ENCODE measurements at regions of chr1 and their contacts with region 1.

Region 1: DNA sequence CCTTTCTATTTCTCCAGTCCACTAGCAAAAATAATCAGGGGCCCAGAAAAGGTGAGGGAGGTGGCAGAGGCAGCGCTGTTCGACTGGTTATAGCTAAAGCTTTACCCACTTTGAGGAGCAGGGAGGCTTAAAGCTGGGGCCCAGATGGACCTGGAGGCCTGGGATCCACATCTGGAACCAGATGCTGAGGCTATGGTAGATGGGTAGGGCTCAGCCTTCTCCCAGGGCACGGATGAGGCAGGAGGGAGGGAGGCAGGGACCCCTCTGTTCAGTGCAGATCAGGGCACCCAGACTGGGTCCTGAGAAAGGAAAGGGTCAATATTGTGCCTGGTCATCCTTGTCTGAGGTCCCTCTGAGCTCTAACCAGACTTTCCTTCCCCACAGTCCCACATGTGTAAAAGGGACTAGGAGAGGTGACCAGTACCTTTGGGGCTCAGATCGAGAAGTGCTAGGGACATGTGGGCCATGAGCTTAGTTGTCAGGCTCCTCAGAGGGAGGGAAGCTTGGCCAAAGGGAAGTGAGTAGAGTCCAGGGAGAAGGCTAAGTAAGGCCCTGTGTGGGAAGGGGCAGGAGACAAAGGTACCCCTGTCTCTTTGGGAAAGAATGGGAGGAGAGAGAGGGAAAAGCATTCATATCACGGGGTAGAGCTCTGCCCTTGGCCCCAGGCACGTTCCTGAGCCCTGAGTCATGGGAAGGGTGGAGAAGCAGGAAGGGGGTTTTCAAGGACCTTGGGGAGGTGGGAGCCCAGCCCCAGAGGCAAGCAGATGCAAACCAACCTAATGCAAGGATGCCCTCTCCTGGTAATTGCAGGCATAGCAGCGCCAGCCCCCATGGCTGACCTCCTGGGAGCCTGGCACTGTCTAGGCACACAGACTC is 15.4 kb downstream of the LMNA start:
- DNase-seq: peak; percentile 77
- CTCF ChIP-seq: peak; percentile 96

Region 2: GRCh38 chr1:155424091-155424490 is 705.9 kb before region 1 on chr1:
- CTCF ChIA-PET with region 1: no interaction called
- POLR2A ChIA-PET with region 1: no interaction called
- DNase-seq: no peak
- CTCF ChIP-seq: no peak

Region 3: DNA sequence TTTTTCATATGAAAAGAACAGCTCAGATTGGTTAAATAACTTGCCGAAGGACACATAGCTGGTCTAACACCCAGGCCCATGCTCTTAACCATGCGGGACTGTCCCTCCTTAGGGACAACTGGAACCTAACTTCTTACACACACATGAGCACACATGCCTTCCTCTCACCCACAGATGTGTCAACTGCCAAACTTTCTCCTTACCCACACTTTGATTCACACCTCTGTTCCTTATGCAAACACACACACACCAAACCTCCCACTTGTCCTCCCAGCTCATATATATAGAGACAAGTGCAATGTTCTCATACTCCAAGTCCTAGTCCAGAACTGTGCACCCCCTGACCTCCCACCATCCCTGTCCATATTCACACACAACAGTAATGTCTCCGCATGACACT is 64.7 kb before region 1 on chr1:
- CTCF ChIA-PET with region 1: interaction called, 12 read pairs
- POLR2A ChIA-PET with region 1: no interaction called
- DNase-seq: no peak
- CTCF ChIP-seq: no peak

Region 4: DNA sequence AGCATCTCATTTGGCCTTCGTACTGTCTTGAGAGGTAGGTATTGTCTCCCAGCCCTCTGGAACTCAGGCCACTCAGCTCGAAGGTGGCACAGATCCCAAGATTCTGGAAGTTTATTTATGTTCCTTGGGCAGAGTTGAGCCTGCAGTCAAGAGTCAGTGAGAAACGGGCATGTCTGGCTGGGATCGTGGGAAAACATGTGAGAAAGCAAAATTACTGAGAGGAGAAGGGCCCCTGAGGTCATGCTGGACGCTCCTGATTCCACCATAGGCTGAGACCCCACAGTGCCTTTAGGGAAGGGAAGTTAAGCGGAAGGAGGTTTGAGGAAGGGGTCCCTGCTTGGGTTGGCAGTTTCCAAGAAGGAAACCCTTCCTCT is 10.9 kb after region 1 on chr1:
- CTCF ChIA-PET with region 1: interaction called, 64 read pairs
- POLR2A ChIA-PET with region 1: interaction called, 4 read pairs
- DNase-seq: no peak
- CTCF ChIP-seq: no peak

Region 5: GRCh38 chr1:156154317-156154749 is 24.4 kb after region 1 on chr1:
- CTCF ChIA-PET with region 1: interaction called, 17 read pairs
- POLR2A ChIA-PET with region 1: interaction called, 8 read pairs
- DNase-seq: peak; percentile 83
- CTCF ChIP-seq: no peak

Region 6: DNA sequence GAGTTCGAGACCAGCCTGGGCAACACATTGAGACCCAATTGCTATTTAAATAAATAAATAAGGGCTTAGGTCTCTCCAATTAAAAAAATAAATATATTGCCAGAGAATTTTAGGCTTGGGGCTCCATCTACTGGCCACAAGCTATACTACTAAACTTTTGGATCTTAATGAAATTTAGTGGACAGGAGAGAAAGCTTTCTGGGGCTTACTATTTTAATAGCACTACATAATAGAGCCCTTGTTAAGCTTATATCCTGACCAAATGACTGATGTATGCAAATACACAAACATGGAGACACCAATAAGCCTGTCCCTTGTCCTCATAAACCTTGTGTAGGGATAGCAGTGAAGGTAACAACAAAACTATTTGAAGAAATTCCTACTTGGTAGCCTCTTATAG is 189.7 kb after region 1 on chr1:
- CTCF ChIA-PET with region 1: interaction called, 14 read pairs
- POLR2A ChIA-PET with region 1: no interaction called
- DNase-seq: peak; percentile 35
- CTCF ChIP-seq: peak; percentile 35